ENCODE measurements at regions of chr11 and their contacts with region 1.

Region 1: GRCh38 chr11:46238967-46239800 is 38.3 kb upstream of the CREB3L1 start:
- DNase-seq: peak; percentile 53 to 91 (median 78)
- ATAC-seq: peak; percentile 80
- H3K4me3 ChIP-seq: peak overlapping the region; percentile 41
- H3K4me3 Mint-ChIP-seq: peak overlapping the region; percentile 65
- H3K27ac ChIP-seq: no peak overlapping the region
- H3K27ac Mint-ChIP-seq: no peak overlapping the region
- H3K4me1 ChIP-seq: peaks cover 38% of the 10 kb centered on the region
- H3K4me1 Mint-ChIP-seq: peaks cover 15% of the 10 kb centered on the region
- H3K27me3 ChIP-seq: peaks cover 14 to 15% of the 10 kb centered on the region in 2 experiments
- H3K27me3 Mint-ChIP-seq: peaks cover 49% of the 10 kb centered on the region
- CTCF ChIP-seq: peak; percentile 97

Region 2: GRCh38 chr11:45846974-45847910 is 391.9 kb before region 1 on chr11 and contains the start of gene CRY2:
- CTCF ChIA-PET with region 1: no interaction called
- POLR2A ChIA-PET with region 1: interaction called, 3 read pairs
- intact Hi-C with region 1: loop called in 1 of 2 experiments (anchors 10 kb)
- DNase-seq: peak; percentile 95 to 99 (median 98)
- ATAC-seq: peak; percentile 77
- H3K4me3 ChIP-seq: peak within 1 kb of the TSS; percentile 94
- H3K4me3 Mint-ChIP-seq: peak within 1 kb of the TSS; percentile 96
- H3K27ac ChIP-seq: peak within 1 kb of the TSS; percentile 91 to 93
- H3K27ac Mint-ChIP-seq: peak within 1 kb of the TSS; percentile 100
- H3K4me1 ChIP-seq: peaks cover 41% of the 10 kb centered on the region
- H3K4me1 Mint-ChIP-seq: peaks cover 70% of the 10 kb centered on the region
- H3K27me3 ChIP-seq: no peaks in the 10 kb centered on the region
- H3K27me3 Mint-ChIP-seq: no peaks in the 10 kb centered on the region
- CTCF ChIP-seq: no peak
- total RNA-seq, gene CRY2: 248 TPM

Region 3: GRCh38 chr11:46308631-46309419 is 69.6 kb after region 1 on chr11:
- CTCF ChIA-PET with region 1: interaction called, 21 read pairs
- POLR2A ChIA-PET with region 1: interaction called, 3 read pairs
- intact Hi-C with region 1: loop called (anchors 1 kb)
- DNase-seq: peak; percentile 40 to 79 (median 56)
- ATAC-seq: peak; percentile 87
- H3K4me3 ChIP-seq: no peak overlapping the region
- H3K4me3 Mint-ChIP-seq: no peak overlapping the region
- H3K27ac ChIP-seq: no peak overlapping the region
- H3K27ac Mint-ChIP-seq: no peak overlapping the region
- H3K4me1 ChIP-seq: peaks cover 9% of the 10 kb centered on the region
- H3K4me1 Mint-ChIP-seq: peaks cover 5% of the 10 kb centered on the region
- H3K27me3 ChIP-seq: no peaks in the 10 kb centered on the region
- H3K27me3 Mint-ChIP-seq: no peaks in the 10 kb centered on the region
- CTCF ChIP-seq: peak; percentile 84

Region 4: GRCh38 chr11:46346886-46347636 is 107.9 kb after region 1 on chr11 and contains the start of gene DGKZ:
- CTCF ChIA-PET with region 1: interaction called, 9 read pairs
- POLR2A ChIA-PET with region 1: interaction called, 10 read pairs
- intact Hi-C with region 1: no loop called
- DNase-seq: peak; percentile 77 to 97 (median 88)
- ATAC-seq: peak; percentile 77
- H3K4me3 ChIP-seq: peak within 1 kb of the TSS; percentile 99
- H3K4me3 Mint-ChIP-seq: peak within 1 kb of the TSS; percentile 95
- H3K27ac ChIP-seq: peak within 1 kb of the TSS; percentile 44 to 73
- H3K27ac Mint-ChIP-seq: peak within 1 kb of the TSS; percentile 89
- H3K4me1 ChIP-seq: peaks cover 86% of the 10 kb centered on the region
- H3K4me1 Mint-ChIP-seq: peaks cover 83% of the 10 kb centered on the region
- H3K27me3 ChIP-seq: no peaks in the 10 kb centered on the region
- H3K27me3 Mint-ChIP-seq: no peaks in the 10 kb centered on the region
- CTCF ChIP-seq: peak; percentile 34
- total RNA-seq, gene DGKZ: 159 to 166 TPM

Region 5: GRCh38 chr11:46529095-46529905 is 290.1 kb after region 1 on chr11:
- CTCF ChIA-PET with region 1: interaction called, 3 read pairs
- POLR2A ChIA-PET with region 1: no interaction called
- intact Hi-C with region 1: loop called in 1 of 2 experiments (anchors 2 kb)
- DNase-seq: peak; percentile 53 to 84 (median 66)
- ATAC-seq: peak; percentile 99
- H3K4me3 ChIP-seq: no peak overlapping the region
- H3K4me3 Mint-ChIP-seq: no peak overlapping the region
- H3K27ac ChIP-seq: no peak overlapping the region
- H3K27ac Mint-ChIP-seq: no peak overlapping the region
- H3K4me1 ChIP-seq: peaks cover 10% of the 10 kb centered on the region
- H3K4me1 Mint-ChIP-seq: peaks cover 38% of the 10 kb centered on the region
- H3K27me3 ChIP-seq: no peaks in the 10 kb centered on the region
- H3K27me3 Mint-ChIP-seq: no peaks in the 10 kb centered on the region
- CTCF ChIP-seq: peak; percentile 97

Region 6: DNA sequence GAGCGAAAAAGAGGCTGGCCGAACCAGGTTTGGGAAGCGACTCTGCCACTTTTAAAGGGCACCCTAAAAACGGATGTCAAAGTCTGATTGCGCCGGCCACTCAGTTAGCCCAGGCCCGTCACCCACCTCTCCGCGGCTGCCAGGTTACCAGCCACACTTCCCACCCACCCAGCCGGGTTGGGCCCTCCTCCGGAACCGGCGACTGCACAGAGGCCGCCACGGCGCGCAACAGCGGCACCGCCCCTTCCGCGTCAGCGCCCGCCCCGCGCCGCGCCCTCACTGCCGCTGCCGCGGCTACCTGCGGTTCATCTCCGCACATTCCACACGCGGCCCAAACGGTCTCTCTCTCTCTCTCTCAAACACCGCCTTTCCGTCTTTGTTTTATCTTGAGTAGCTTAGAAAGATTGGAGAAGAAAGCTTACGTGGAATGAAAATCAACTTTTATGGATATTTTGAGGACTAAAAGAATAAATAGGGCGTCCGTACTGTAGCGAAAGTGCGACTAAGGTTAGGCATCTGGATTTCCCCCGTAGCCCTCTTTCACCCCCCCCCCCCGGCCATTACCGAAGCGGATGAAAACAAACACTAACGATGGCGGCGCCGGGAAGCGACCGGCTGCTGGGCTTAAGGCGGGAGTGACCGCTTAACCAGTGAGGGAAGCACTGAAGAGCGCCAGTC is 378.0 kb after region 1 on chr11 and contains the starts of genes ATG13 and HARBI1:
- CTCF ChIA-PET with region 1: no interaction called
- POLR2A ChIA-PET with region 1: no interaction called
- intact Hi-C with region 1: loop called (anchors 5 to 10 kb)
- DNase-seq: peak; percentile 84 to 96 (median 90)
- ATAC-seq: peak; percentile 92
- H3K4me3 ChIP-seq: peak within 1 kb of the TSS; percentile 76
- H3K4me3 Mint-ChIP-seq: peak within 1 kb of the TSS; percentile 100
- H3K27ac ChIP-seq: peak within 1 kb of the TSS; percentile 98 to 99
- H3K27ac Mint-ChIP-seq: peak within 1 kb of the TSS; percentile 97
- H3K4me1 ChIP-seq: peaks cover 45% of the 10 kb centered on the region
- H3K4me1 Mint-ChIP-seq: peaks cover 48% of the 10 kb centered on the region
- H3K27me3 ChIP-seq: no peaks in the 10 kb centered on the region
- H3K27me3 Mint-ChIP-seq: no peaks in the 10 kb centered on the region
- CTCF ChIP-seq: no peak
- total RNA-seq, gene ATG13: 95.7 to 102 TPM
- total RNA-seq, gene HARBI1: 18.2 to 18.7 TPM